H1 (cell line): ENCODE measurements at regions of chr1 and their contacts with region 1.

Region 1: DNA sequence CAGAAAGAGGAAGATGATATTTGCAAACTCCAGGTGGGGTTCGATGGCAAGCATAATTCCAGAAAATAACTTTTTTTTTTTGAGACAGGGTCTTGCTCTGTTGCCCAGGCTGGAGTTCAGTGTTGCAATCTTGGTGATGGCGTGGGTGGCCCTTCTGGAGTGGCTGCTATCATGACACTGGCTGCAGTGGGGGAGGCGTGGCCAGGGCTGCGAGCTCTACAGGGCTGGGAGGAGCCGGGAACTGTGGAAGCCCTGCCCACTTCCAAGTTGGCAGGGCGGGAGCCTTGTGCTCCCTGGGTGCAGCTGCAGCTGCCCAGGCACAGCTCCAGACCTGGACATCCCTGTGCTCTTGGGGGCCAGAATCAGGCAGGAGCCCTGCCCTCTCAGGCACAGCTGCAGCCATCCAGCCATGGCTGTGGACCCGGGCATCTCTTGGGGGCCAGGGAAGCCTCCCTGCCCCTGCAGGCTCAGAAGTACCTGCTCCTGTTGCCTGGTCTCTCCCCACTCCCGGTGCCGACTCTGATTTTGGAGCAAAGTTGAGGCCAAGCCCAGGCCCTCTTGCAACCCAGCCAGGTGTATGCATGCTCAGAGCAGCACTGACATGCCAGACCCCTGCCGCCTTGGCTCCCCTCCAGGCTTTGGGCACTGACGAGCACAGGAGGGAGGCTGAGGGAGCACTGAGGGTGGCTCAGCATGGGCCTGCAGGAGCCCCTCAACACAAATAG is 7.2 kb upstream of the BCL10 start:
- DNase-seq: no peak
- H3K4me3 ChIP-seq: no peak overlapping the region
- H3K27ac ChIP-seq: no peak overlapping the region
- H3K4me1 ChIP-seq: peaks cover 0 to 3% (median 1%) of the 10 kb centered on the region in 4 experiments; a peak in 3 of 7 replicates
- H3K27me3 ChIP-seq: no peaks in the 10 kb centered on the region
- CTCF ChIP-seq: no peak
- EP300 ChIP-seq: no peak
- POLR2A ChIP-seq: no peak
- RAD21 ChIP-seq: no peak

Region 2: DNA sequence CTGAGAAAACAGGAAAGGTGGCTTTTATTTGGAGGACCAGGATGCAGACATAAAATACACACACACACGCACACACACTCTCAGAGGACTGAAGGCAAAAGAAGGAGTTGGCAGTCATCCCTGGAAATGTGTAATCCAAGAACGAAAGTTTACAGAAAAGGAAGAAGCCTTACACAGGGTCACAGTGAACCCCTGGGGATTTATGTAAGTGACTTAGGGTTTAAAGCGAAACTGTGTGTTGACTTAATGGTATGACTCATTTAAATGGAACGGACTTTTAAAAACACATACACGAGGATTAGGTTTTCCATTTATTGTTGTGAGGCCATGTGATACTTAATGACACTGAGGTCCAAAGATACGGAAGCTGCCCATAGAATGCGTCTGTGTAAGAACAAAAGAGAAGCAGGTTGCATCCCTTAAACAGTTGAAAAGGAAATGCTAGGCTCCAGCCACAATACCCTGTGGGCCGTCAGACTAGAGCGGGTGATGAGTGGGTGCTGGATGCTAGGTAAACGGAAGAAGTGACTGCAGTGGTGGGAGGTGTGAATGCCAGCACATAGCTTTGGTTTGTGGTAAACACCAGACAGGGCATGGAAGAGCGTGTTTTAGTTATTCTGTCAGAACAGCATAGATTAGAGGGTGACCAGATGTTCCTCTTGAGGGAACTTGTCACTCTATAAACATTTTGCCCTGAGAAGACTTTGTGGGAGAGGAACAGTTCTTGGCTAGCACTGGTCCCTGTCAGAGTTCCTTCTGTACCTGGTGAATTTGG is 14.4 kb after region 1 on chr1:
- CTCF ChIA-PET with region 1: interaction called, 26 read pairs
- POLR2A ChIA-PET with region 1: interaction called, 3 read pairs
- DNase-seq: no peak
- H3K4me3 ChIP-seq: no peak overlapping the region
- H3K27ac ChIP-seq: no peak overlapping the region
- H3K4me1 ChIP-seq: peaks cover 0 to 2% (median 0%) of the 10 kb centered on the region in 4 experiments; a peak in 1 of 7 replicates
- H3K27me3 ChIP-seq: no peaks in the 10 kb centered on the region
- CTCF ChIP-seq: no peak
- EP300 ChIP-seq: no peak
- POLR2A ChIP-seq: no peak
- RAD21 ChIP-seq: no peak

Region 3: GRCh38 chr1:85504360-85504811 is 220.7 kb after region 1 on chr1:
- CTCF ChIA-PET with region 1: no interaction called
- POLR2A ChIA-PET with region 1: no interaction called
- DNase-seq: no peak
- H3K4me3 ChIP-seq: no peak overlapping the region
- H3K27ac ChIP-seq: no peak overlapping the region
- H3K4me1 ChIP-seq: no peaks in the 10 kb centered on the region
- H3K27me3 ChIP-seq: peaks cover 0 to 2% (median 0%) of the 10 kb centered on the region in 4 experiments; a peak in 1 of 7 replicates
- CTCF ChIP-seq: no peak
- EP300 ChIP-seq: no peak
- POLR2A ChIP-seq: no peak
- RAD21 ChIP-seq: no peak